ENCODE measurements at regions of chr11 and their contacts with region 1.

Region 1: GRCh38 chr11:72430741-72431570 is 3.4 kb downstream of the CLPB start:
- DNase-seq: no peak
- ATAC-seq: no peak
- H3K4me3 Mint-ChIP-seq: no peak overlapping the region
- H3K27ac Mint-ChIP-seq: no peak overlapping the region
- H3K4me1 Mint-ChIP-seq: peaks cover 36% of the 10 kb centered on the region
- H3K27me3 Mint-ChIP-seq: no peaks in the 10 kb centered on the region
- CTCF ChIP-seq: no peak

Region 2: DNA sequence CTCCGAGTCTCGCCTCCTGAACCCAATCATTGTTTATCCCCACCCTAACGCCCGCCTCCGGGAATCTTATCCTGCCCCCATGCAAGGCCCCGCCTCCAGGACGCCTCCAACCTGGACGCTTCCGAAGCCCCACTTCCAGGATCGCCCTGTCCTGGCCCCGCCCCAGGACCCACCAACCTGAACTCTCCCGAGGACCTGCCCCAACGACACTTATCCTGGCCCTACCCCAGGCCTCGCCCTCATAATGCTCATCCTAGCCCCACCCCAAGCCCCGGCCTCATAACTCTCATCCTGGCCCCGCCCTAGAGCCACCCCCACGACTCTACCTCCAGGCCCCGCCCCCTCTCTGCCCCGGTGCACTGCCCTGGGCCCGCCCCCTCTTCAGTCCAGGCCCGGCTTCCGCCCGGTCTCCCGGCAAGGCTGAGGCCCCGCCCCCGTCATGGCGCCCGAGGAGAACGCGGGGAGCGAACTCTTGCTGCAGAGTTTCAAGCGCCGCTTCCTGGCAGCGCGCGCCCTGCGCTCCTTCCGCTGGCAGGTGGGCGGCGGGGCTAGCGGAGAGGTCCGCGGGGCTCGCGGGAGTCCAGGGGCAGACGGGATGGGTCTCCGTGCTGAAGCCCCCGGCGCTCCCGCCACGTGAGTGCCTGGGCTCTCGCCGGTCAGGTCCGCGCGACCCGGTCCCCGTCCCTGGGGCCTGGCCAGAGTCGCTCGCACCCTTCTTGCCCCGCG is 643.7 kb before region 1 on chr11:
- CTCF ChIA-PET with region 1: no interaction called
- POLR2A ChIA-PET with region 1: no interaction called
- intact Hi-C with region 1: loop called (anchors 2 kb)
- DNase-seq: peak; percentile 95
- ATAC-seq: peak; percentile 95
- H3K4me3 Mint-ChIP-seq: peak overlapping the region; percentile 95
- H3K27ac Mint-ChIP-seq: peak overlapping the region; percentile 96
- H3K4me1 Mint-ChIP-seq: peaks cover 19% of the 10 kb centered on the region
- H3K27me3 Mint-ChIP-seq: no peaks in the 10 kb centered on the region
- CTCF ChIP-seq: no peak

Region 3: GRCh38 chr11:71986131-71986530 is 444.8 kb before region 1 on chr11:
- CTCF ChIA-PET with region 1: no interaction called
- POLR2A ChIA-PET with region 1: interaction called, 15 read pairs
- intact Hi-C with region 1: no loop called
- DNase-seq: no peak
- ATAC-seq: peak; percentile 92
- H3K4me3 Mint-ChIP-seq: no peak overlapping the region
- H3K27ac Mint-ChIP-seq: peak overlapping the region; percentile 68
- H3K4me1 Mint-ChIP-seq: peaks cover 36% of the 10 kb centered on the region
- H3K27me3 Mint-ChIP-seq: no peaks in the 10 kb centered on the region
- CTCF ChIP-seq: no peak

Region 4: DNA sequence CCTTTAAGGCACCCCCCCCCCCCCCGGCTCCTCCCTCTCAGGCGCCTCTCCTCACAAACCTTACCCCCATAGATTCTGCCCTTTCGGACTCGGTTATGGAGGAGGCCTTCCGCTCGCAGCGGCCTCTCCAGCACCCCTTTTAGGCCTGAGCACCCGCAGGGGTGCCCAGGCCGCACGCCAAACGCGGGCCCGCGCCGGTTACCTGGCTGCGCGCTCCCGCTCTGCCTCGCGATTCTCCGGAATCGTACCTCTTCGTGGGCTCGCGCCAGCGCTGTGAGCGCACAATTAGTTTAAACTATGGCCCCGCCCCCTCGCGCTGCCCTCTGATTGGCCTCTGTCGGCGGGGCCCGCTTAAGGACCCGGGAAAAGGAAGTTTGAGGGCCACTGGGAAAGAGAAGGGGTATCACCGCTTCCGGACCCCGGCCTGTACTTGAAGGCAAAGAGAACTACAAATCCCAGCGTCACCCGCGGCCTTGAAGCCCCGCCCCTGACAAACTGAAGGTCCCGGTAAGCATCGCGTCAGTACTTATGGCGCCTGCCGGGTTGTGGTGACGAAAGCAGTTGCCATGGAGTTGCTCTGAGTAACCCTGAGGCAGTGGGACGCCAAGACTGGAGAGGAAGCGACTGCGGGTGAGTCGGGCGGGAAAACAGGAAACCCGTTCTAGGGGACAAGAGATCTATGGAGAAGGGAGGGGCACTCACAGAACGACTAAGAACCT is 350.5 kb before region 1 on chr11 and contains the starts of genes LRRC51 and NUMA1:
- CTCF ChIA-PET with region 1: no interaction called
- POLR2A ChIA-PET with region 1: no interaction called
- intact Hi-C with region 1: loop called (anchors 1 kb)
- DNase-seq: peak; percentile 94
- ATAC-seq: peak; percentile 90
- H3K4me3 Mint-ChIP-seq: peak within 1 kb of the TSS; percentile 95
- H3K27ac Mint-ChIP-seq: peak within 1 kb of the TSS; percentile 91
- H3K4me1 Mint-ChIP-seq: peaks cover 35% of the 10 kb centered on the region
- H3K27me3 Mint-ChIP-seq: no peaks in the 10 kb centered on the region
- CTCF ChIP-seq: no peak
- total RNA-seq, gene LRRC51: 4.1 and 4.5 TPM in 2 replicates
- total RNA-seq, gene NUMA1: 146 and 163 TPM in 2 replicates

Region 5: DNA sequence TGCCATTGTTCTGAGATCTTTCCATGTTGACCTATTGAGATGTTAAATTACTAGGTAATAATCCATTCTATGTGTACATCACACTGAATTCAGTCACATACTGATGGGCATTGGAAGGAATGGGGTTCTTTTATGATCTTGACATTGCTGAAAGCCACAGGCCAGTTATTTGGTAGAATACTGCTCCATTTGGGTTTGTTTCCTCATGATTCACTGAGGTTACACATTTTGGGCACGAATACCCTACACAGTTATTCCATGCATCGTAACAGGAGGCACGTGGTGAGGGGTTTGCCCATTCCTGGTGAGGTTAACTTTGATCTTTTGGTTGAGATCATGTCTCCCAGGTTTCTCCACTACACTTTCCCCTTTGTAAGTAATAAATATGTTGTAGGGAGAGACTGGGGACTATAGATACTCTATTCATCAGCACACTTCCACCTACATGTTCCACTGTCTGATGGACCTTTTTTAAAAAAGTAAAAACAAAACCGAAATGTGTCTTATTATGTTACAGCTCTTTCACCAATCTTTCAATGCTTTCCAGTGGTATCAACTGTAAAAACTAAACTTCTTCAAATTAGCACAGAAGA is 251.1 kb before region 1 on chr11:
- CTCF ChIA-PET with region 1: interaction called, 6 read pairs
- POLR2A ChIA-PET with region 1: no interaction called
- intact Hi-C with region 1: loop called (anchors 1 kb)
- DNase-seq: no peak
- ATAC-seq: no peak
- H3K4me3 Mint-ChIP-seq: no peak overlapping the region
- H3K27ac Mint-ChIP-seq: no peak overlapping the region
- H3K4me1 Mint-ChIP-seq: peaks cover 4% of the 10 kb centered on the region
- H3K27me3 Mint-ChIP-seq: peaks cover 22% of the 10 kb centered on the region
- CTCF ChIP-seq: no peak

Region 6: GRCh38 chr11:72354356-72355115 is 76.4 kb before region 1 on chr11:
- CTCF ChIA-PET with region 1: interaction called, 6 read pairs
- POLR2A ChIA-PET with region 1: no interaction called
- intact Hi-C with region 1: loop called (anchors 5 kb)
- DNase-seq: no peak
- ATAC-seq: no peak
- H3K4me3 Mint-ChIP-seq: no peak overlapping the region
- H3K27ac Mint-ChIP-seq: no peak overlapping the region
- H3K4me1 Mint-ChIP-seq: no peaks in the 10 kb centered on the region
- H3K27me3 Mint-ChIP-seq: no peaks in the 10 kb centered on the region
- CTCF ChIP-seq: no peak

Region 7: DNA sequence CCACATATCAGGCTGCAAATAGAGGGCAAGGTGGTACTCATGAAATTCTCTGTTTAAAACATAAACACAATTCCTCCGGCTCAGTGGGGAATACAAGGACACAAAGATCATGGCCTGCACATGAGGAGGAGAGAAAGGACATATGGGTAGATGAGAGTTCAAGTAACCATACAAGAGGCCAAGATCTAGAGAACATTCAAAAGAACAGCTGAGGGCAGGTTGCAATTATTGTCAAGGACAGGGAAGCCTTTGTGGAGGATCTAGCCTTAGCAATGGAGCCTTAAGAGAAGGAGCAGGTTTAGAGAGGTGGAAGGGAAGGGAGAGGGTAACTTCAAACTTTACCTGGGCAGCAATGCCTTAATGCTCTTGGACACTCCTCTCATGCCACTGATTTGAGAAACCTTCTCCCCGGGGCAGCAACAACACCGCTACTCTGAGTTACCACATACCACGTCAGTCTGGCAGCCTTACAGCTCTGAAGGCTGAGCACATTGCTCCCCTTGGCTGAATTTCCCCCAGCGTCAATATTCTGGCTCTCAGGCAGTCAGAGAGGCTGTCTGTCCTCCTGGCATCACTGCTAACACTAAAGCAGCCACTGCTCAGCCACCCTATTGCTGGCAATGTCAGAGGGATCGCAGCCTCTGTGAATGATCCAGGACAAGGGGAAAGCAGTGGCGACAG is 52.1 kb before region 1 on chr11:
- CTCF ChIA-PET with region 1: no interaction called
- POLR2A ChIA-PET with region 1: no interaction called
- intact Hi-C with region 1: no loop called
- DNase-seq: no peak
- ATAC-seq: no peak
- H3K4me3 Mint-ChIP-seq: no peak overlapping the region
- H3K27ac Mint-ChIP-seq: no peak overlapping the region
- H3K4me1 Mint-ChIP-seq: no peaks in the 10 kb centered on the region
- H3K27me3 Mint-ChIP-seq: no peaks in the 10 kb centered on the region
- CTCF ChIP-seq: no peak

Measured in activated B cell treated with CpG ODN at 0.5 μM for 24 hours (primary cell).